Activated B cell treated with CpG ODN at 0.5 μM for 24 hours (primary cell): ENCODE measurements at regions of chr19 and their contacts with region 1.

Region 1: GRCh38 chr19:13093407-13094105 is 9.1 kb downstream of the LYL1 start:
- DNase-seq: peak; percentile 73
- ATAC-seq: peak; percentile 56
- H3K4me3 Mint-ChIP-seq: peak overlapping the region; percentile 29
- H3K27ac Mint-ChIP-seq: peak overlapping the region; percentile 95
- H3K4me1 Mint-ChIP-seq: peaks cover 36% of the 10 kb centered on the region
- H3K27me3 Mint-ChIP-seq: no peaks in the 10 kb centered on the region
- CTCF ChIP-seq: peak; percentile 71

Region 2: DNA sequence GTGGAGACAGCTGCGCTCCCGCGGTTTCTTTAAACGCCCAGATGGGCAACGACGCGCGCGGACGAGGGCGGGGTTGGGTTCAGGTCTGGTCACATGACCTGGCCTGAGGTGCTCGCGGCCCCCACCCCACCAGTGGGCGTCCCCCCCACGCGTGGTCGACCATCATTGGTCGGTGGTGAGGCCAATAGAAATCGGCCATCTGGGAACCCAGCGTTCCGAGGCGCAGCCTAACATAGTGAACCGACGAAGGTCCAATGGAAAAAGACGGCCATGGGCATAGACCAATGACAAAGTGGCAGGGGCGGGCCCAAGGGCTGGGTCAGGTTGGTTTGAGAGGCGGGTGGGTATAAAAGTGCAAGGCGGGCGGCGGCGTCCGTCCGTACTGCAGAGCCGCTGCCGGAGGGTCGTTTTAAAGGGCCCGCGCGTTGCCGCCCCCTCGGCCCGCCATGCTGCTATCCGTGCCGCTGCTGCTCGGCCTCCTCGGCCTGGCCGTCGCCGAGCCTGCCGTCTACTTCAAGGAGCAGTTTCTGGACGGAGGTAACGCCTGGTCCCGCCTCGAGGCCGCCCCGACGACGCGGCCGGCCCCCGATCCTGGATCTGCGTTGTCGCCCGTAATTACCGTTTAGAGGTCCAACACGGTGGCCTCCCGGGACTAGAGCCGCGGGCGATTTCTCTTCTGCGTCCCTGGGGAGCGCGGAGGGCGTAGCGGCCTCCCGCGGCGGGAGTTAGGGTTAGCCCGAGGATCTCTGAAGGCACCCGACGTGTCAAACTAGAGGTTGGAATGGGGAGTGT is 155.1 kb before region 1 on chr19 and contains the start of gene CALR:
- CTCF ChIA-PET with region 1: no interaction called
- POLR2A ChIA-PET with region 1: interaction called, 19 read pairs
- intact Hi-C with region 1: no loop called
- DNase-seq: peak; percentile 96
- ATAC-seq: peak; percentile 85
- H3K4me3 Mint-ChIP-seq: peak within 1 kb of the TSS; percentile 99
- H3K27ac Mint-ChIP-seq: peak within 1 kb of the TSS; percentile 95
- H3K4me1 Mint-ChIP-seq: peaks cover 62% of the 10 kb centered on the region
- H3K27me3 Mint-ChIP-seq: no peaks in the 10 kb centered on the region
- CTCF ChIP-seq: no peak
- total RNA-seq, gene CALR: 721 and 802 TPM in 2 replicates

Region 3: GRCh38 chr19:12974301-12975220 is 119.0 kb before region 1 on chr19:
- CTCF ChIA-PET with region 1: interaction called, 106 read pairs
- POLR2A ChIA-PET with region 1: interaction called, 28 read pairs
- intact Hi-C with region 1: loop called (anchors 1 kb)
- DNase-seq: no peak
- ATAC-seq: no peak
- H3K4me3 Mint-ChIP-seq: no peak overlapping the region
- H3K27ac Mint-ChIP-seq: no peak overlapping the region
- H3K4me1 Mint-ChIP-seq: peaks cover 6% of the 10 kb centered on the region
- H3K27me3 Mint-ChIP-seq: peaks cover 7% of the 10 kb centered on the region
- CTCF ChIP-seq: no peak

Region 4: DNA sequence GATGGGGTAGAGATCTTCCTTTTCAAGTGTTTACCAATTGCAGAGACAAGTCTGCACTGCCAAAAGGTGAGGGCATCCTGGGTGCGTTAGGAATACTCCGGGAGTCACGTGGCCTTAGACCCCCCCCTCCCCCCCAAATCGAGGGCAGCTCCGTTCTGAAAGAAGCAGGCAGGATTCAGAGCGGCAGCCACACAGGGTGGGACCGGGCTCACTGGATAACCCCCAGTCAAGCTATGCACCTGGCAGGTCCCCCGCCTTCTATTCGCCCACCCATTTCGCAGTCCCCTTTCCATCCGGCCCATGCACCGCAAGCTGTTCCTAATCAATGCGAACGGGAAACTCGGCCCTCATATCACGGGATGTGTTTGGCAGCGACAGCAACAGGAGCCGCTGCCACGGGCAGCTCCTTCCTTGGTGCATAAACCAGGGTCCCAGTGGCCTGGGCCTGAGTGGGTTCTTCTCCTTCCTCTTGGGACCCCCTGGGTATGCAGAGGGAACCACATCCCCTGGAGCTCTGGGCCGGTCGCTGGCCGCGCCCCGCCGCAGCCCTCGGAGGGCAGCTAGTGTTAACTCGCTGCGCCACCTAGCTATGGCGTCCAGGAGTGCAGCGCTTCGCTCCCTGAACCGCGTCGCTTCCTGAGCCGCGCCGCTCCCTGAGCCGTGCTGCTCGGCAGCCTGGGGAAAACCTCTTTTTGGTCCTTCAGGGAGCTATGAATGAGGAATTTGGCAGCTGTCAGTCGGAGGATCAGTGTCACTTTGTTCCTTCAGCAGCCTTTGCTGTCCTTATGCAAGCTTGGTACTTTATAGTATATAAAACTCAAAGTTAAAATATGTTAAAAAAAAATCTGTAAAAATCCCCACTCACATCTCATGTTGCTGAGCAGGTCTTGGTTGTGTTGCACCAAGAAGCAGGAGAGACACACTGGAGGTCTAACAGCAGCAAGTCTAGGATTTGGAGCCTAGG is 32.3 kb before region 1 on chr19:
- CTCF ChIA-PET with region 1: interaction called, 27 read pairs
- POLR2A ChIA-PET with region 1: interaction called, 4 read pairs
- intact Hi-C with region 1: loop called (anchors 1 kb)
- DNase-seq: peak; percentile 74
- ATAC-seq: peak; percentile 99
- H3K4me3 Mint-ChIP-seq: peak overlapping the region; percentile 81
- H3K27ac Mint-ChIP-seq: no peak overlapping the region
- H3K4me1 Mint-ChIP-seq: peaks cover 5% of the 10 kb centered on the region
- H3K27me3 Mint-ChIP-seq: peaks cover 14% of the 10 kb centered on the region
- CTCF ChIP-seq: peak; percentile 93

Region 5: DNA sequence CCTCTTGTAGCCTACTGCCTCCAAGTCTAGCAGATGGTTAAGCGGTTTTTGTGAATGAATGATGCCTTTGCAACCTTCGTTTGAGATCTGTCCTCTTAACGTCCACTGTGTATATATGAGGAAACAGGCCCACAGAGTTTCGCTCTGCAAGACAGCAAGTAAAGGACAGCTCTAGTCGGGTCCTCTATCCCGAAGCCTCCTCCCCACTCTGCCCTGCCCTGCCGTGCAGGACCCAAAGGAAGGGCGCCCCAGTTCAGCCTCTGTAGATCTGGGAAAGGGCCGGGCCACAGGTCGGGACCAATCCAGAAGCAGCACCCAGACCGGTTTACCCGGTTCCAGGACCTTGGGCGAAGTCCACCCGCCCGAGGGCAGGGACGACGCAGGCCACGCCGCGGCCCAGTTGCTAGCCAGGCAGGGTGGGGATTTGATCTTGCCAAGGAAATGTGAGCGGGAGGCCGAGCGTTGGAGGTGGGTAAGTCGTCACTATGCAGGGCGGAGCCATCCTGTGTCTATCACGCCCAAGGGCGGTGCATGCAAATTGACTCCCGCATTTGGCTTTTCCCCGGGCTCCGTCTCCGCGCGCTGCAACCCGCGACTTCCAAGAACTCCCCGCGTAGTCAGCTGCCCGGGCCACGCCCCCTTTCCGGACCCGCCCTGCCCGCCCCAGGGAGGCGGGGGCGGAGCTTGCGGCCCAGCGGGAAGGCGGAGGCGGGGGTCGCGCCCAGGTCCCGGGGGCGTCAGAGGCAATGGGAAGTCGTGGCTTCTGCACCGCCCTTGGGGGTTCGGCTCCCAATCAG is 69.2 kb after region 1 on chr19:
- CTCF ChIA-PET with region 1: interaction called, 3 read pairs
- POLR2A ChIA-PET with region 1: interaction called, 22 read pairs
- intact Hi-C with region 1: no loop called
- DNase-seq: peak; percentile 70
- ATAC-seq: peak; percentile 36
- H3K4me3 Mint-ChIP-seq: peak overlapping the region; percentile 84
- H3K27ac Mint-ChIP-seq: peak overlapping the region; percentile 89
- H3K4me1 Mint-ChIP-seq: peaks cover 87% of the 10 kb centered on the region
- H3K27me3 Mint-ChIP-seq: no peaks in the 10 kb centered on the region
- CTCF ChIP-seq: no peak